ENCODE measurements at regions of chr7 and their contacts with region 1.

Region 1: GRCh38 chr7:100101016-100101862 is at the starts of genes AP4M1 and MCM7:
- DNase-seq: peak; percentile 94 to 98
- H3K4me3 ChIP-seq: peak within 1 kb of the TSS; percentile 76 to 97 (median 84)
- H3K27ac ChIP-seq: peak within 1 kb of the TSS; percentile 98
- H3K4me1 ChIP-seq: peaks cover 0 to 8% (median 3%) of the 10 kb centered on the region in 4 experiments; a peak in 3 of 7 replicates
- H3K27me3 ChIP-seq: no peaks in the 10 kb centered on the region
- CTCF ChIP-seq: no peak; a peak in 1 of 4 replicates
- EP300 ChIP-seq: no peak
- POLR2A ChIP-seq: peak in 1 of 2 experiments; percentile 77; a peak in 2 of 3 replicates
- RAD21 ChIP-seq: no peak
- total RNA-seq, gene AP4M1: 15.2 and 15.8 TPM in 2 replicates
- total RNA-seq, gene MCM7: 339 and 344 TPM in 2 replicates

Region 2: DNA sequence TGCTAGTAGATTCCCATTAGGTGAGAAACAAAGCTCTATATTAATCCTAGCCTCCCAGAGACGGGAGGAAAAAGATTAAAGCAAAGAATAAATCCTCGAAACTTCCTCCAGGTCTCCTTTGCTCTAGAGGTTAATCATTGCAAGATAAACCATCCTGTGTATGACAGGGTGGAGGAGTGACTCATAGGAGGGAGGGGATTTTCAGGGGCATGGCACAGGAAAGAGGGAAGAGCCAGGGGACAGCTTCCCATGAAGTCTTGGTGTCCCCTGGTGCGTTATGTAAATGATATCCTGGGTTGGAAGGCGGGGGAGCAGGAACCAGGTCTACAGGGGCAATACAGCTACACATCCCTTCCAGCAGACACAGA is 422.2 kb before region 1 on chr7:
- CTCF ChIA-PET with region 1: no interaction called
- POLR2A ChIA-PET with region 1: no interaction called
- DNase-seq: no peak
- H3K4me3 ChIP-seq: no peak overlapping the region
- H3K27ac ChIP-seq: no peak overlapping the region
- H3K4me1 ChIP-seq: peaks cover 0 to 3% (median 0%) of the 10 kb centered on the region in 4 experiments; a peak in 1 of 7 replicates
- H3K27me3 ChIP-seq: no peaks in the 10 kb centered on the region
- CTCF ChIP-seq: no peak
- EP300 ChIP-seq: no peak
- POLR2A ChIP-seq: no peak
- RAD21 ChIP-seq: no peak

Region 3: DNA sequence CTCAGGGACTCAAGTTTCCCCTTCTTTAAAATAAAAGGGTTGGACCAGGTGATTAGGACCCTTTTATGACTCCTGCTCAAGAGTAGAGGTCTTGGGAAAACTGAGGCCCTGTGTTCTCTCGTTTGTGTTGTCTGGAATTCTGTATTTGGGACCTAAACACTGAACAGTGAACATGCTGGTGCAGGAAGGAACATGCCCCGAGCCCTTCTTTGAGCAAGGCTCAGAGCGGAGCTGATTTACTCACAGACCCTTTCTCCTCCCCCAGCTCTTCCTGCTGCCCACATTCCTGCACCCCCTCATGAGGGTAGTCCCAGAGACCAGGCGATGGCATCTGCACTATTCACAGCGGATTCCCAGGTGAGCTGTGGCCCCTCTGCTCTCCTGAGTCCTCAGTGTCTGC is 71.6 kb before region 1 on chr7:
- CTCF ChIA-PET with region 1: no interaction called
- POLR2A ChIA-PET with region 1: interaction called, 10 read pairs
- DNase-seq: no peak
- H3K4me3 ChIP-seq: no peak overlapping the region
- H3K27ac ChIP-seq: no peak overlapping the region
- H3K4me1 ChIP-seq: no peaks in the 10 kb centered on the region
- H3K27me3 ChIP-seq: no peaks in the 10 kb centered on the region
- CTCF ChIP-seq: no peak
- EP300 ChIP-seq: no peak
- POLR2A ChIP-seq: no peak
- RAD21 ChIP-seq: no peak

Region 4: DNA sequence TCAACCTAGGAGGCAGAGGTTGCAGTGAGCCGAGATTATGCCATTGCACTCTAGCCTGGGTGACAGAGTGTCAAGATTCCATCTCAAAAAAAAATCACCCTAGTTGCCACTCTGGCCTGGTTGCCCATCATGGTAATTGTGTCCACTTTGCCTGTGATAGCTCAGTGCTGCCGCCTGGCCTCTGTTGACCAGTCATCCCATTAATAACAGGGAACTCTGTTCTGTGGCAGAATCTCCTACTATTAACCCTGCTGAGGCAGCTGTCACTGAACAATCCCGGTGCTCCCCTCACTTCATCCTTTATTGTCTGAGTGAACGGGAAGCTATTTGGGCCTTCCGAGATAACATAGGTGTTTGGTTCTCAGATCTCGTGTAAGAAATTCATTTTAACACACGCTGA is 34.3 kb before region 1 on chr7:
- CTCF ChIA-PET with region 1: no interaction called
- POLR2A ChIA-PET with region 1: interaction called, 12 read pairs
- DNase-seq: no peak
- H3K4me3 ChIP-seq: no peak overlapping the region
- H3K27ac ChIP-seq: no peak overlapping the region
- H3K4me1 ChIP-seq: no peaks in the 10 kb centered on the region
- H3K27me3 ChIP-seq: no peaks in the 10 kb centered on the region
- CTCF ChIP-seq: peak; percentile 0 to 23 (median 4); a peak in 3 of 4 replicates
- EP300 ChIP-seq: no peak
- POLR2A ChIP-seq: no peak
- RAD21 ChIP-seq: peak in 1 of 2 experiments; percentile 22; a peak in 1 of 4 replicates

Region 5: GRCh38 chr7:100119062-100119700 is 17.9 kb after region 1 on chr7 and contains the starts of genes CNPY4 and TAF6:
- CTCF ChIA-PET with region 1: interaction called, 5 read pairs
- POLR2A ChIA-PET with region 1: interaction called, 722 read pairs
- DNase-seq: peak; percentile 89 to 94
- H3K4me3 ChIP-seq: peak within 1 kb of the TSS; percentile 75 to 98 (median 94)
- H3K27ac ChIP-seq: peak within 1 kb of the TSS; percentile 88
- H3K4me1 ChIP-seq: peaks cover 0 to 5% (median 1%) of the 10 kb centered on the region in 4 experiments; a peak in 4 of 7 replicates
- H3K27me3 ChIP-seq: no peaks in the 10 kb centered on the region
- CTCF ChIP-seq: peak in 1 of 3 experiments; percentile 1; a peak in 1 of 4 replicates
- EP300 ChIP-seq: no peak
- POLR2A ChIP-seq: peak; percentile 54 to 66; a peak in 2 of 3 replicates
- RAD21 ChIP-seq: no peak
- total RNA-seq, gene CNPY4: 15.3 and 15.9 TPM in 2 replicates
- total RNA-seq, gene TAF6: 101 and 109 TPM in 2 replicates

Region 6: GRCh38 chr7:100148559-100149350 is 47.5 kb after region 1 on chr7 and contains the start of gene LAMTOR4:
- CTCF ChIA-PET with region 1: no interaction called
- POLR2A ChIA-PET with region 1: interaction called, 17 read pairs
- DNase-seq: peak; percentile 94 to 99
- H3K4me3 ChIP-seq: peak within 1 kb of the TSS; percentile 71 to 89 (median 78)
- H3K27ac ChIP-seq: no peak within 1 kb of the TSS
- H3K4me1 ChIP-seq: peaks cover 0 to 4% (median under 1%) of the 10 kb centered on the region in 4 experiments; a peak in 3 of 7 replicates
- H3K27me3 ChIP-seq: no peaks in the 10 kb centered on the region
- CTCF ChIP-seq: peak in 1 of 3 experiments; percentile 18; a peak in 2 of 4 replicates
- EP300 ChIP-seq: no peak
- POLR2A ChIP-seq: peak; percentile 38 to 69; a peak in 2 of 3 replicates
- RAD21 ChIP-seq: no peak
- total RNA-seq, gene LAMTOR4: 153 and 161 TPM in 2 replicates

Region 7: GRCh38 chr7:100171087-100171681 is 69.9 kb after region 1 on chr7:
- CTCF ChIA-PET with region 1: no interaction called
- POLR2A ChIA-PET with region 1: interaction called, 24 read pairs
- DNase-seq: peak in 1 of 2 experiments; percentile 84
- H3K4me3 ChIP-seq: peak overlapping the region; percentile 47 to 67 (median 56)
- H3K27ac ChIP-seq: no peak overlapping the region
- H3K4me1 ChIP-seq: peaks cover 11 to 30% (median 19%) of the 10 kb centered on the region in 4 experiments
- H3K27me3 ChIP-seq: peaks cover 0 to 10% (median 2%) of the 10 kb centered on the region in 4 experiments; a peak in 2 of 7 replicates
- CTCF ChIP-seq: no peak
- EP300 ChIP-seq: no peak
- POLR2A ChIP-seq: 0 out of 3 replicates have a peak, but pooled peaks of 1 of the 2 experiments have one; percentile 38
- RAD21 ChIP-seq: no peak

Region 8: DNA sequence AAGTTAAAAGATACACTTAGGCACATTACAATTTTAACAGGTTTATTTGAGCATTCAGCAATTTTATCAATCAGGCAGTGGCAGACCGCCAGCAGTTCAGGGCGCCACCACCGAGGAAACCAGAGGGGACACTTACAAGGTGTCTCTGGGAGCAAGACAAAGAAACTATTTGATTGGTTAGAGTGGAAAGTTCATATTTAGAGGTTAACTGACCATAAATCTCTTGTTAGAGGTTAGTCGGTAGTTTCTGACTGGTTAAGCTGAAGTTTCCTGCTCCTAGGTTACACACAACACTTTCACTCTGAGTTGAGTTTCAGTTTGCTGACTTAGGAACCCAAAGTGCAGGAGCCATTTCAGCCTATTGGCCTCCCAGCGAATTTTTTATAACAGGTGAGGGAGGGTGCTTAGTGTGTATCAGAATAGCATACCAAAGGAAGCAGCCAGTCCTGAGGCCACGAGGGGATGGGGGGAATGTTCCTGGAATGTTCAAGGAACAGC is 107.7 kb after region 1 on chr7:
- CTCF ChIA-PET with region 1: no interaction called
- POLR2A ChIA-PET with region 1: no interaction called
- DNase-seq: no peak
- H3K4me3 ChIP-seq: no peak overlapping the region
- H3K27ac ChIP-seq: no peak overlapping the region
- H3K4me1 ChIP-seq: peaks cover 0 to 4% (median 2%) of the 10 kb centered on the region in 4 experiments; a peak in 1 of 7 replicates
- H3K27me3 ChIP-seq: peaks cover 0 to 14% (median 5%) of the 10 kb centered on the region in 4 experiments; a peak in 6 of 7 replicates
- CTCF ChIP-seq: no peak
- EP300 ChIP-seq: no peak
- POLR2A ChIP-seq: no peak
- RAD21 ChIP-seq: no peak

Region 9: DNA sequence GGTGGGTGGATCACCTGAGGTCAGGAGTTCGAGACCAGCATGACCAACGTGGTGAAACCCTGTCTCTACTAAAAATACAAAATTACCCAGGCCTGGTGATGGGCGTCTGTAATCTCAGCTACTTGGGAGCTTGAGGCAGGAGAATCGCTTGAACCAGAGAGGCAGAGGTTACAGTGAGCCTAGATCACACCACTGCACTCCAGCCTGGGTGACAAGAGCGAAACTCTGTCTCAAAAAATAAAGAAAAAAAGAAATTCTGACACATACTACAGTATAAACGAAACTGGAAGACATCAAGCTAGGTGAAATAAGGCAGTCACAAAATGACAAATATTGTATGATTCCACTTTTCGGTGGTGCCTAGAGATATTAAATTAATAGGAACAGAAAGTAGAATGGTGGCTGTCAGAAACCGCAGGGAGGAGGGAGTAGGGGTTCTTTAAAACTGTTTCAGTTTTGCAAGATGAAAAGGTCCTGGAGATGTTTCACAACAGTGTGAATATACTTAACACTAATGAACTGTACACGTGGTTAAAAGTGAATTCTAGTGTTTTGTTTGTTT is 295.3 kb after region 1 on chr7:
- CTCF ChIA-PET with region 1: no interaction called
- POLR2A ChIA-PET with region 1: no interaction called
- DNase-seq: no peak
- H3K4me3 ChIP-seq: no peak overlapping the region
- H3K27ac ChIP-seq: no peak overlapping the region
- H3K4me1 ChIP-seq: peaks cover 0 to 10% (median 5%) of the 10 kb centered on the region in 4 experiments; a peak in 6 of 7 replicates
- H3K27me3 ChIP-seq: peaks cover 0 to 2% (median 0%) of the 10 kb centered on the region in 4 experiments; a peak in 1 of 7 replicates
- CTCF ChIP-seq: no peak
- EP300 ChIP-seq: no peak
- POLR2A ChIP-seq: no peak
- RAD21 ChIP-seq: no peak

Measured in H1 (cell line).